ENCODE measurements at regions of chr9 and their contacts with region 1.

Region 1: DNA sequence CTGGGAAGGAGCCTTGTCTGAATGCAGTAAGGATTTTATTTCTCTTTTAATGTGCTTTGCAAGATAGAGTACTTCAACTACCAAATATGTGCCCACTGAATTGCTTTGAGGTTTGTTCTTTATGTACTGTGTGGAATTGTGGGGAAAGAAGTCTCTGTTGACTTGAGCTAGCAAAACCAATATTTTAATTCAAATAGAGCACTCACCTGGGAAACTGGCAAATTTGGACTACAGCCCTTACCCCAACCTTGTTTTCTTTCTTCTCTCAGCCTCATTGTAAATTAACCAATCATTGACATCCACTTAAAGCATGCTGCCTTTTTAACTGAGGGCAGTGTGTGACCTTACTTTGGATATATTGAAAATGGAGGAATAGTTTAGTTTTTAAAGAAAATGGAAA is 409.0 kb downstream of the SPATA31D1 start:
- DNase-seq: no peak
- ATAC-seq: no peak
- H3K4me3 Mint-ChIP-seq: no peak overlapping the region
- H3K27ac Mint-ChIP-seq: no peak overlapping the region
- H3K4me1 Mint-ChIP-seq: no peaks in the 10 kb centered on the region
- H3K27me3 Mint-ChIP-seq: no peaks in the 10 kb centered on the region
- CTCF ChIP-seq: no peak

Region 2: GRCh38 chr9:82456642-82457041 is 59.1 kb after region 1 on chr9:
- CTCF ChIA-PET with region 1: no interaction called
- POLR2A ChIA-PET with region 1: no interaction called
- intact Hi-C with region 1: loop called (anchors 10 kb)
- DNase-seq: no peak
- ATAC-seq: no peak
- H3K4me3 Mint-ChIP-seq: no peak overlapping the region
- H3K27ac Mint-ChIP-seq: no peak overlapping the region
- H3K4me1 Mint-ChIP-seq: no peaks in the 10 kb centered on the region
- H3K27me3 Mint-ChIP-seq: no peaks in the 10 kb centered on the region
- CTCF ChIP-seq: no peak